MCF 10A (cell line): ENCODE measurements at regions of chr17 and their contacts with region 1.

Region 1: DNA sequence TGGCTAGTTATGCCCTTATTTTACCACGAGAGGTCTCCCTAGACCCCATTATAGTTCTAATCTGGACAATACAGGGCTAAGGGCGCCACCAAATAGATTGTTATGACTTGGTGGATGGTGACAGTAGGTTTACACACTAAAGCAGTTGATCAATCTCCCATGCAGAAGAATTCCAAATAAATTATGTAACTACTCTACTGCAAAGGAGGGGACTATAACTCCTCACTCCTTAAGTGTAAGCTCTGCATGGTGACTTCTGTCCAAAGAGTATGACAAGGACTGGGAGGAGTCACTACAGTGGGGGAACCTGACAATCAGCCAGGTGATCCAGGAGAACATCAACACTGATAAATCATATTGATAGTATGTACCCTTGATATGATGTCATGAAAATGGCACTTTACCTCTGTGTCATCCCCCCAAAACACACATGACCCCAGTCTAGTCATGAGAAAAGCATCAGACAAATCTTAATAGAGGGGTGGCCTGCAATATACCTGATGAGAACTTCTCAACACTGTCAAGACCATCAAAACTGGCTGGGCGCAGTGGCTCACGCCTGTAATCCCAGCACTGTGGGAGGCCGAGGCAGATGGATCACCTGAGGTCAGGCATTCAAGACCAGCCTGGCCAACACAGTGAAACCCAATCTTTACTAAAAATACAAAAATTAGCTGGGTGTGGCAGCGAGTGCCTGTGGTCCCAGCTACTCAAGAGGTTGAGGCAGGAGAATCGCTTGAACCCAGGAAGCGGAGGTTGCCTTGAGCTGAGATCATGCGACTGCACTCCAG is 20.1 kb upstream of the YPEL2 start:
- DNase-seq: peak; percentile 75
- H3K4me3 Mint-ChIP-seq: no peak overlapping the region
- H3K27ac Mint-ChIP-seq: no peak overlapping the region
- H3K4me1 Mint-ChIP-seq: peaks cover 5% of the 10 kb centered on the region
- H3K27me3 Mint-ChIP-seq: no peaks in the 10 kb centered on the region
- CTCF ChIP-seq: peak; percentile 79

Region 2: GRCh38 chr17:59220376-59221158 is 90.8 kb before region 1 on chr17 and contains the start of gene GDPD1:
- CTCF ChIA-PET with region 1: interaction called, 4 read pairs
- POLR2A ChIA-PET with region 1: interaction called, 4 read pairs
- intact Hi-C with region 1: loop called (anchors 2 kb)
- DNase-seq: peak; percentile 91
- H3K4me3 Mint-ChIP-seq: peak within 1 kb of the TSS; percentile 94
- H3K27ac Mint-ChIP-seq: peak within 1 kb of the TSS; percentile 52
- H3K4me1 Mint-ChIP-seq: peaks cover 5% of the 10 kb centered on the region
- H3K27me3 Mint-ChIP-seq: no peaks in the 10 kb centered on the region
- CTCF ChIP-seq: peak; percentile 61
- total RNA-seq, gene GDPD1: 2.2 and 2.9 TPM in 2 replicates

Region 3: GRCh38 chr17:59451706-59452105 is 140.4 kb after region 1 on chr17:
- CTCF ChIA-PET with region 1: interaction called, 10 read pairs
- POLR2A ChIA-PET with region 1: no interaction called
- intact Hi-C with region 1: no loop called
- DNase-seq: peak; percentile 58
- H3K4me3 Mint-ChIP-seq: no peak overlapping the region
- H3K27ac Mint-ChIP-seq: peak overlapping the region; percentile 47
- H3K4me1 Mint-ChIP-seq: peaks cover 6% of the 10 kb centered on the region
- H3K27me3 Mint-ChIP-seq: no peaks in the 10 kb centered on the region
- CTCF ChIP-seq: no peak

Region 4: DNA sequence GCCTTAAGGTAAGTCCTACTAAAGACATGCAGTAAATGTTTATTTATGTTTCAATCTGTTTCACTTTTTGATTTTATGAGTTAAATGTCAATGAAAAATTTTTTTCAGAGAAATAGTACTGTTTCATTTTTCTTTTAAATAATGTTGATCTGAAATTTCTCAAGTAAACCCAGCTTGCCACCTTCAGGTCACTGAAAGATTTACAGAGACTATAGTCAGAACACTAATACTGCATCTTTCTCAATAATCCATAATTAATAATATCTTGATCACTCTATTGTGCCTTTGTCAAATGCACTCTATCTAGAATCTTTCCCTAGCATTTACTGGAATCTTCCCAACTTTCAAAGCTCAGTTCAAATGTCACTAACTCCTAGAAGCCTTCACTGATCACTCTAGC is 247.7 kb after region 1 on chr17:
- CTCF ChIA-PET with region 1: interaction called, 11 read pairs
- POLR2A ChIA-PET with region 1: interaction called, 4 read pairs
- intact Hi-C with region 1: loop called (anchors 1 kb)
- DNase-seq: no peak
- H3K4me3 Mint-ChIP-seq: no peak overlapping the region
- H3K27ac Mint-ChIP-seq: no peak overlapping the region
- H3K4me1 Mint-ChIP-seq: no peaks in the 10 kb centered on the region
- H3K27me3 Mint-ChIP-seq: peaks cover 11% of the 10 kb centered on the region
- CTCF ChIP-seq: peak; percentile 15

Region 5: DNA sequence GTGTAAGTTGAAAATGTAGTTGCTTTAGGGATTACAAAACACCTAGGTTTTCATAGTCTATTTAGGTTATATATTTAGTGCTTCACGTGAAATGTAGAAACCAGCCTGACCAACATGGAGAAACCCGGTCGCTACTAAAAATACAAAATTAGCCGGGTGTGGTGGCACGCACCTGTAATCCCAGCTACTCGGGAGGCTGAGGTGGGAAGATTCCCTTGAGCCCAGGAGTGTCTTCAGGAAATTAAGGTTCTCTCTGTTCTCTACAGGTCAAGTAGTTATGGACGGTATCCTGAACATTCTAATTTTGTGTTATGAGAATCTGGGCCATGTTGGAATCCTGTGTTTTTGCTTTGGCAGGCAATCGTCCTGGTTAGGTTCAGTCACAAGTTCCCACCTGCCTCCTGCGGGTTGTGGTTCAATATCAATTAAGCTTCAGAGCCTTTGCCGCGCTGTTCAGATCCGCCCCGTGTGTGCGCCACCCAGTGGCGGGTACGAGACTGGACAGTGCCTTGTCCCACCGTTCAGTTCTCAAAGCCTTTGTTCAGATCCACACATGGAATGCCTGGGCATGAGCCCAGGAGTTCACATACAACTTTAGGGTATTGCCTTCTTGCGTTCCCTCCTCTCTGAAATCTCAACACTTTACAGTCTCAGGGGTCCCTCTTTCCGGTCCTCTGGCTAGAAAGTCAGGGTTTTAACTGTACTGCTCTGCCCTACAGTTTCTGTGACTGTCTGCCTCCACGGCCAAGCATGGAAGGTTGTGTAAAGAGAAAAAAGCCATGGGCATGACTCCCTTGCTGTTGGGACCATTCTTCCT is 725.7 kb after region 1 on chr17:
- CTCF ChIA-PET with region 1: no interaction called
- POLR2A ChIA-PET with region 1: no interaction called
- intact Hi-C with region 1: loop called (anchors 10 kb)
- DNase-seq: peak; percentile 73
- H3K4me3 Mint-ChIP-seq: no peak overlapping the region
- H3K27ac Mint-ChIP-seq: no peak overlapping the region
- H3K4me1 Mint-ChIP-seq: no peaks in the 10 kb centered on the region
- H3K27me3 Mint-ChIP-seq: no peaks in the 10 kb centered on the region
- CTCF ChIP-seq: peak; percentile 84